Upper lobe of right lung (tissue), 1 donor: ENCODE measurements at regions of chr10 and their contacts with region 1.

Region 1: DNA sequence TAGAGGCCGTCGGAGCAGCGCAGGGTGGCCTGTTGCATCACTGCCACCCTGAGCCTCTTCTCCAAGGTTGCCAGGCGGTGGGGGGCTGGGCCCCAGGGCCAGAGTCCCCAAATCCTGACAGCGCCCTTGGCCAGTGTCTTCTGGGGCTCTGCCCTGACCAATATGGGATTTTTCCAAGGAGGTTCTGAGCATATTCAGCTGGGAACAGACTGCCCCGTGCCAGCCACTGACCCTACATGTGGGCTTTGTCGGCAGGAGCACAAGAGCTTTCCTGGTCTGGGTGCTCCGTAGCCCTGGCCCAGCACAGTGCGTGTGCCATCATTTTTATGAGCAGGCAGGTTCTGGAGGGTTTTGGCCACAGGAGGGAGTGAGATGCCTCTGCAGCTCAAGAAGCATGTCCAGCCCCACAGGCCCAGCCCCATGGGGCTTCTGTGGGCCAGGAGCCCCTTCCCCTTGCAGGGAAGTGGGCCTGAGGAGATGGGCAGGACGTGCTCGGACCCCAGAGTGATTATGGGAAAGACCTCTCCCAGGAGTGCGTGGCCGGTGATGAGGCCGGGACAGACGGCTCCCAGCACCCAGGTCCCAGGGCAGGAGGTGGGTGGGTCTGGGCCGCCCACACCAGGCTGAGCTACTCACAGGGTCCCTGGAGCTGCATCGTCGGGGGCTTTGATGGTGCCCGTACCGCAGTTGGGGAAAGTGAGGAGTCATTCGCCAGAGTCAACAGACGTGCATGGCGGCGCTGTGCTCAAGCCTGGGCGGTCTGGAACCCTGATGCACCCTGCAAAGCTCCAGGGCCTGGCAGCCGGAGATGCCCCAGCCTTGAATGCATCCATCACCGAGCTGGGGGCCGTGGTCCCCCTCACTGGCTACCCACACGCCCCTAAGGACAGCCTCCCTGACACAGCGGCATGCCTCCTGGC is 66.6 kb downstream of the PWWP2B start:
- DNase-seq: no peak
- ATAC-seq: no peak
- H3K4me3 ChIP-seq: no peak overlapping the region
- H3K27ac ChIP-seq: peak overlapping the region; percentile 85
- H3K4me1 ChIP-seq: peaks cover 22% of the 10 kb centered on the region
- H3K27me3 ChIP-seq: no peaks in the 10 kb centered on the region
- CTCF ChIP-seq: peak; percentile 17

Region 2: DNA sequence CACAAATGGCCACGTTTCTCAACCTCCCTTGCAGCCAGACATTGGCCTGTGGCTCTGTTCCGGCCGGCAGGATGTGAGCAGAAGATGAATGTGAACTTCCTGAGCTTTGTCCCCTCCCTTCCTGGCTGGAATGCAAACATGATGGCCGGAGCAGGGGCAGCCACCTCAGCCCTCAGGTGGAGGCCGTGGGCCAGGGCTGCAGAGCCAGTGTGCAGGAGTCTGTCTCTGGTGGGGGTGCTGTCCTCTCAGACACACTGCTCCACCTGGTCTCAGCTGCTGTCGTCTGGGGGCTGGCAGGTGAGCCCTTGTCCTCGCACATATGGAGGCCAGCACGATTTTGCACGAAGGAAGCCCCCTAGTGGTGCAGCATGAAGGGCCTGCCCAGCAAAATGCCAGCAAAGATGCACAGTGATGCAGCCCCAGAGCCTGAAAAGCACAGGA is 91.9 kb before region 1 on chr10:
- intact Hi-C with region 1: no loop called
- DNase-seq: peak; percentile 50
- ATAC-seq: no peak
- H3K4me3 ChIP-seq: no peak overlapping the region
- H3K27ac ChIP-seq: no peak overlapping the region
- H3K4me1 ChIP-seq: no peaks in the 10 kb centered on the region
- H3K27me3 ChIP-seq: no peaks in the 10 kb centered on the region
- CTCF ChIP-seq: peak; percentile 23

Region 3: GRCh38 chr10:132637477-132638129 is 174.0 kb after region 1 on chr10:
- intact Hi-C with region 1: loop called (anchors 5 kb)
- DNase-seq: peak; percentile 32
- ATAC-seq: peak; percentile 73
- H3K4me3 ChIP-seq: no peak overlapping the region
- H3K27ac ChIP-seq: no peak overlapping the region
- H3K4me1 ChIP-seq: peaks cover 25% of the 10 kb centered on the region
- H3K27me3 ChIP-seq: no peaks in the 10 kb centered on the region
- CTCF ChIP-seq: peak; percentile 70